CD4-positive, alpha-beta T cell (primary cell): ENCODE measurements at regions of chr7 and their contacts with region 1.

Region 1: GRCh38 chr7:52352013-52352981 is 683.1 kb upstream of the POM121L12 start:
- DNase-seq: no peak
- ATAC-seq: no peak
- H3K4me3 ChIP-seq: no peak overlapping the region
- H3K4me3 Mint-ChIP-seq: no peak overlapping the region
- H3K27ac ChIP-seq: no peak overlapping the region
- H3K27ac Mint-ChIP-seq: no peak overlapping the region
- H3K4me1 ChIP-seq: no peaks in the 10 kb centered on the region
- H3K4me1 Mint-ChIP-seq: no peaks in the 10 kb centered on the region
- H3K27me3 ChIP-seq: no peaks in the 10 kb centered on the region
- H3K27me3 Mint-ChIP-seq: no peaks in the 10 kb centered on the region
- CTCF ChIP-seq: no peak

Region 2: GRCh38 chr7:52302765-52303520 is 49.4 kb before region 1 on chr7:
- CTCF ChIA-PET with region 1: no interaction called
- POLR2A ChIA-PET with region 1: no interaction called
- intact Hi-C with region 1: loop called in 1 of 2 experiments (anchors 5 kb)
- DNase-seq: peak in 1 of 14 experiments; percentile 5
- ATAC-seq: no peak
- H3K4me3 ChIP-seq: no peak overlapping the region
- H3K4me3 Mint-ChIP-seq: no peak overlapping the region
- H3K27ac ChIP-seq: no peak overlapping the region
- H3K27ac Mint-ChIP-seq: no peak overlapping the region
- H3K4me1 ChIP-seq: no peaks in the 10 kb centered on the region
- H3K4me1 Mint-ChIP-seq: peaks cover 6% of the 10 kb centered on the region
- H3K27me3 ChIP-seq: no peaks in the 10 kb centered on the region
- H3K27me3 Mint-ChIP-seq: no peaks in the 10 kb centered on the region
- CTCF ChIP-seq: no peak

Region 3: DNA sequence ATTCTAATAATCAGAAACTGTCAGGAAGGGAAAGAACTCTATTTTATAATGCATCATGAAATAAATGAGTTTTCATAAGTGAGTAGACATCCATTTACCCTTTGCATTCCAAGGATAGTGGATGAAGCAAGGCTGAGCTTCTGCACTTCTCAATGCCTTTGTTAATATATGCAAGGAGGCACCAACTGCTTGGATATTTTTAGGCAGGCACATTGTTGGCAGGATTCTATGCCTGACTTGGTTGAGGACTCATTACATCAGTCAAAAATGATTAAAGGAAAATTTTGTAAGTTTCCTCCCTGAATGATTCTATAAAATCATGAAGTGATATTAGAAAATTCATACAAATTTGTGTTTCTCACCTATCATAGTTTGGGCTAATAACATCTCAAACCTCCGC is 71.0 kb after region 1 on chr7:
- CTCF ChIA-PET with region 1: interaction called, 3 read pairs
- POLR2A ChIA-PET with region 1: no interaction called
- intact Hi-C with region 1: loop called in 1 of 2 experiments (anchors 2 kb)
- DNase-seq: no peak
- ATAC-seq: no peak
- H3K4me3 ChIP-seq: no peak overlapping the region
- H3K4me3 Mint-ChIP-seq: no peak overlapping the region
- H3K27ac ChIP-seq: no peak overlapping the region
- H3K27ac Mint-ChIP-seq: no peak overlapping the region
- H3K4me1 ChIP-seq: no peaks in the 10 kb centered on the region
- H3K4me1 Mint-ChIP-seq: no peaks in the 10 kb centered on the region
- H3K27me3 ChIP-seq: no peaks in the 10 kb centered on the region
- H3K27me3 Mint-ChIP-seq: no peaks in the 10 kb centered on the region
- CTCF ChIP-seq: no peak

Region 4: GRCh38 chr7:53366316-53366715 is 1014.0 kb after region 1 on chr7:
- CTCF ChIA-PET with region 1: no interaction called
- POLR2A ChIA-PET with region 1: no interaction called
- intact Hi-C with region 1: no loop called
- DNase-seq: no peak
- ATAC-seq: no peak
- H3K4me3 ChIP-seq: no peak overlapping the region
- H3K4me3 Mint-ChIP-seq: no peak overlapping the region
- H3K27ac ChIP-seq: no peak overlapping the region
- H3K27ac Mint-ChIP-seq: no peak overlapping the region
- H3K4me1 ChIP-seq: no peaks in the 10 kb centered on the region
- H3K4me1 Mint-ChIP-seq: no peaks in the 10 kb centered on the region
- H3K27me3 ChIP-seq: no peaks in the 10 kb centered on the region
- H3K27me3 Mint-ChIP-seq: no peaks in the 10 kb centered on the region
- CTCF ChIP-seq: no peak